GM10248 (cell line): ENCODE measurements at regions of chr12 and their contacts with region 1.

Region 1: GRCh38 chr12:56286044-56286830 is 13.9 kb downstream of the CS start:
- DNase-seq: no peak
- CTCF ChIP-seq: no peak

Region 2: DNA sequence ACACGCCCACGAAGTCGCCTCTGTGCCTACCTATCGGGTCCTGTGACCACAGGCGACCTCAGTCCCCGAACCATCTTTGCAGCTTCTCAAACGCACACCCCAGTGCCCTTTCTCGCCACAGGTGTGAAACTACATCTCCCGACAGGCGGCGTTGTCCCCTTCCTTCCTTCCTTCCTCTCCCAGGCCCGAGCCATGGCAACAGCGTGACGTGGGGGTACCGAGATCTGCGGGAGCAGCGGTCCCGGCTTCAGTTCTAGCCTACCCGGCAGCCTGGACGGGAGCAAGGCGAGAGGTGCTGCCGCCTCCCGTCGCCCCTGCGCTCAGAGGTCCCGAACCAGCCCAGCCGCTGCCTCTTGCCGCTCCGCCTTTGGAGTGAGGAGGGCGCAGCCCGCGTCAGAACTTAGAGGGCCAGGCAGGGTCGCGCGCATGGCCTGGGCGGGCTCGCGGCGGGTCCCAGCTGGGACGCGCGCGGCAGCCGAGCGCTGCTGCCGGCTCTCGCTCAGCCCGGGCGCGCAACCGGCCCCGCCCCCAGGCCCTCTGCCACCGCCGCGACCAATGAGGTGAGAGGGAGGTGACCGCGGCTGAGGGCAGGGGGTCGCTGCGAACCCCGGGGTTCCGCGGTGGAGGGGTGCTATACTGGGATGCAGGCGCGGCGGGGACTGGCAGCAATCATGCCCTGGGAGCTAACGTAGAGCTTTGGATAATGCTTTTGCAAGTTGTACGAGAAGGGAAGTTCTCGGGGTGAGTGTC is 19.4 kb before region 1 on chr12 and contains the start of gene COQ10A:
- CTCF ChIA-PET with region 1: interaction called, 33 read pairs
- POLR2A ChIA-PET with region 1: interaction called, 5 read pairs
- DNase-seq: peak; percentile 94
- CTCF ChIP-seq: peak; percentile 43